ENCODE measurements at regions of chr1 and their contacts with region 1.

Region 1: DNA sequence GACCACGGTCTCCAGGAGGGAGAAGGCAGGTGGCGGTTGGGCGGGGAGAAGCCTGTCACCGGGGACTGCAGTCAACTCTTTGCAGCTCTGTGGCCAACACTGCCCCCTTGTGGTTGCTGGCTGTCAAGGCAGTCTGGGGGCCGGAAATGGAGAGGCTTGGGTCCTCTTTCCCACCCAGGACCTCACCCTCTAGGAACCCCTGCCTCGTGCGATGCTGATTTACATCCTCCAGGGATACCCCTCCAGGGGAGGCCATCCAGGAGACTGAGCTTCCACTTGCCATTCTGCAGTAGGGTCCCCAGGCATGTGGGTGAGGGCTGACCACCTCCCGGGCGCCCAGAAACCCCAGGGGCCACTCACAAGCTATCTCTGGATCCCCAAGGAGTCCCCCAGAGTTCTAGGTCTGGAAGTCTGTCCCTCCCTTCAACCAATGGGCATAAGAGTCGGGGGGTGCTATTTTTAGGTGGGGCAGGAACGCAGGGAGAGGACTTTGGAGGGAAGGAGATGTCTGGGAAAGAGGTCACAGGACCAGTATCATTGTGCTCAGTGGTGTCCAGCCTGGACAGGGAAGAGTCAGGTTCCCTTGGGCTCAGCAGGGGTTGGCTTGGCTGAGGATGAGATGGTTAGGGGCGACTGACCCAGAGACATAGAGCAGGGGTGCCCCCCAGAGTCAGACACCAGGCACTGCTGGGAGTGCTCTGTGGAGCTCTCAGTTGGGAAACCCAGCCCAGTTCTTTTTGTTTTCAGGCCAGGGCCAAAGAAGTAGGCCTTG is 7.1 kb upstream of the GPR61 start:
- DNase-seq: no peak
- H3K4me3 ChIP-seq: peak overlapping the region; percentile 34
- CTCF ChIP-seq: peak; percentile 95

Region 2: GRCh38 chr1:109201123-109201703 is 331.3 kb before region 1 on chr1:
- CTCF ChIA-PET with region 1: interaction called, 16 read pairs
- POLR2A ChIA-PET with region 1: no interaction called
- DNase-seq: no peak
- H3K4me3 ChIP-seq: no peak overlapping the region
- CTCF ChIP-seq: peak; percentile 69

Region 3: GRCh38 chr1:109277434-109278204 is 254.9 kb before region 1 on chr1:
- CTCF ChIA-PET with region 1: interaction called, 35 read pairs
- POLR2A ChIA-PET with region 1: no interaction called
- DNase-seq: no peak
- H3K4me3 ChIP-seq: no peak overlapping the region
- CTCF ChIP-seq: peak; percentile 94

Region 4: DNA sequence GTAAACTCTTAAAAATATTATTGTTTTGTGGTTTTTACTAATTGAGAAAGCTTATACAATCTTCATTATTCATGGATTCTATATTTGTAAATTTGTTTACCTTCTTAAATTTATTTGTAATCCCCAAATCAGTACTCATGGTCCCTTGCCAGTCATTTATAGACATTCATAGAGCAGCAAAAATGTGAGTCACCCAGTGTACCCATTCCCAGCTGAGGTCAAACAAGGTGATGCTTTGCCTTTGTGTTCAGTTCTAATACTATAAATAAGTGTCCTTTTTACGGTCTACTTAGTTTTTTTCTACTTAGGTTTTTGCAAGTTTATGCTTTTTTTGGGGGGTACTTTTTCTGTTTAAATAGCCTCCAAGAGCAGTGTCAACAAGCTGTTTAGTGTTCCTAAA is 170.9 kb before region 1 on chr1:
- CTCF ChIA-PET with region 1: no interaction called
- POLR2A ChIA-PET with region 1: no interaction called
- DNase-seq: no peak
- H3K4me3 ChIP-seq: no peak overlapping the region
- CTCF ChIP-seq: no peak

Region 5: DNA sequence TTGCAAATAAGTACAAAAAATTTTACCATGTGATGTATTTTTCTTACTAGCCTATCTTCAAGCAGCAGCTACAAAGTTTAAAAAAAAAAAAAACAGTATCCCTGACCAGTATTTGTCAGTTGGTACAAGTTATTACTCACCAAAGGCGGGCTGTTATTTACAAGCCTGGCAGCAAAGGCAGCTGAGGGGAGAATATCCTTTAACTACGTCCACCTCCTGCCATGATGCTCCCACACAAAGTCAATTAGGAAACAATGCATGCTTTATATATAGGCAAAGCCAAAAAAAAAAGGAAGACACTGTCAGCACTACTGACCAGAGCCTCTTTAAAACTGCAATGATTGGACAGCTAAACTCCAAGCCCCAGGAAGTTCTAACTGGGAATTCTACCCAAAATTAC is 120.0 kb before region 1 on chr1:
- CTCF ChIA-PET with region 1: interaction called, 45 read pairs
- POLR2A ChIA-PET with region 1: no interaction called
- DNase-seq: no peak
- H3K4me3 ChIP-seq: no peak overlapping the region
- CTCF ChIP-seq: no peak

Region 6: DNA sequence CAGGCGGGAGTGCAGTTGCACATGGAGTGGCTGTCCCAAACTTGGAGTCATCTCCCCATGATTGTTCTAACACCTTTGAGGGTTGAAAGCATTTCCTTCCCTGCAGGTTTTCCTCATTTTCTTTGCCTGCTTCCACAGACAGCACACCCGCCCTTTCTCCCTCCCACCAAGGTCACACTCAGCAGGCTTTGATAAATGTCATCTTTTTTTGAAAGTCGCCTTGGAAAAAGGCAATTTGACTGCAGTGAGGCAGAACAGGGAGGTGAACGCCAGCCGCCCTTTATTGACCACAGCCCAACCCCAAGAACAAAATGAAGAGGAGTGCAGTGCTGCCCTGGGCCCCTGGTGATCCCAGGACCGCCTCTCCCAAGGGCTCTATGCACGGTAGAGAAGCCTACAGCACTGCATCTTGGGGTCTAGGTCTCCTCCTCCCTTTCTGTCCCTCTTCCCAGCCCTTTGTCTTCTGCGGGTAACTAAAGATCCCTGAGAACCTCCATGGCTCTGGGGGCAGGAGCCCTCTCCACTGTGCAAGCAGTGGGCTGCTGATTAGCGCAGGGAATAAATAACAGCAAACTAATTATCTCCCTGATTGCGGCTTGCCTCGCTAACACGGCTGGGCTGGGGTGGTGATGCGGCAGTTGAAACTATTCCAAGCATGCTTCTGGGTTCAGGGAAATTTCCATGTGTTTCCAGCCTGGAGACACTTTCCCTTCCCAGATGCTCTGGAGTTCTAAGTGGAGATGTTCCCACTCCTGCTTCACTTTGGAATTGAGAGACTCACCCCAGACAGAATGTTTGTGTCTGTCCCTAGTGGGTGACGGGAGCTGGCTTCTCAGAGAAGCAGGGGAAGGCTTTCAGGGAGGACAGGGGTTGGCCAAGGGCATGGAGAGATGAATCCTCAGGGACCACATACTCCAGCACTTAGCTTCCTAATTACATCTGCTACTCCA is 11.3 kb before region 1 on chr1:
- CTCF ChIA-PET with region 1: interaction called, 2,790 read pairs
- POLR2A ChIA-PET with region 1: no interaction called
- DNase-seq: no peak
- H3K4me3 ChIP-seq: no peak overlapping the region
- CTCF ChIP-seq: no peak

Region 7: GRCh38 chr1:109595531-109595930 is 63.0 kb after region 1 on chr1:
- CTCF ChIA-PET with region 1: no interaction called
- POLR2A ChIA-PET with region 1: no interaction called
- DNase-seq: no peak
- H3K4me3 ChIP-seq: no peak overlapping the region
- CTCF ChIP-seq: no peak

Region 8: GRCh38 chr1:109730666-109731065 is 198.1 kb after region 1 on chr1:
- CTCF ChIA-PET with region 1: no interaction called
- POLR2A ChIA-PET with region 1: no interaction called
- DNase-seq: no peak
- H3K4me3 ChIP-seq: no peak overlapping the region
- CTCF ChIP-seq: no peak

Region 9: DNA sequence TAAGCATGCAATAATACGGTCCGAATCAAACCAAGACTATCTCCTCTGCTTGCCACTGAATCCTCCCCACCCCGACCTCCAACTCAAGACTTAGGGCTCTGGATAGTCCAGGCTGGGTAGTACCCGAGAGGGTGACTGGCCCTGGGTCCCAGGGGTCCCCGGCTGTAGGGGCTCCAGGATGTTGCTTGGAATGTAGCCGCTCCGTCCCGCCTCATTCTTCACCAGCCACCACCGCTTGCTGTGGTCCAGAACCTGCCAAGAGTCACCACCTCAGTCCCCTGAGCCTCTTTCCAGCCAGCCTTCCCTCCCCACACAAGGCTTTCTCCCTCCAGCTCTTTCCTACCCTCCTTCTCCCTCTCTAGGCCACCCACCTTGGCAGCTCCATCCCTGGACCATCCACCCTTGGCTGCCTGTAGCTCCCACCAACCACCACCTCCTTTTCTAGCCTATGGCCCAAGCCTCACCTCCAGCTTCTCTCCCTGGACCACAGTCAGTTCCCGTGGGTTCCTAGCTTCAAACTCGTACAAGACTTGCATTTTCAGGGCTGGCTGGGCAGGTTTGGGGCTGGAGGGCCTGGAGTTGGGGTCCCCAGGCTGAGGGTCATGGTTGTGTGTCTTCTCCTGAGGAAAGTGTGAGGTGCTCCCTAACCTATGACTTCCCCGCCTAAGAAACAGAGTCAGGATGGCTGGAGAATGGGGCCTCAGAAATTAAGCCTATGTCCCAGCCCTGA is 219.1 kb after region 1 on chr1:
- CTCF ChIA-PET with region 1: interaction called, 11 read pairs
- POLR2A ChIA-PET with region 1: no interaction called
- DNase-seq: no peak
- H3K4me3 ChIP-seq: no peak overlapping the region
- CTCF ChIP-seq: no peak